GM12878 (cell line): ENCODE measurements at regions of chr5 and their contacts with region 1.

Region 1: GRCh38 chr5:143524338-143524945 is 121.0 kb upstream of the NR3C1 start:
- DNase-seq: no peak
- ATAC-seq: peak; percentile 66
- H3K4me3 ChIP-seq: no peak overlapping the region
- H3K27ac ChIP-seq: no peak overlapping the region
- H3K4me1 ChIP-seq: no peaks in the 10 kb centered on the region
- H3K27me3 ChIP-seq: no peaks in the 10 kb centered on the region
- CTCF ChIP-seq: no peak
- EP300 ChIP-seq: no peak
- POLR2A ChIP-seq: no peak
- RAD21 ChIP-seq: no peak

Region 2: GRCh38 chr5:143023411-143024096 is 500.9 kb before region 1 on chr5:
- CTCF ChIA-PET with region 1: no interaction called
- POLR2A ChIA-PET with region 1: no interaction called
- RAD21 ChIA-PET with region 1: no interaction called
- SMC1A ChIA-PET with region 1: no interaction called
- in situ Hi-C with region 1: no loop called
- intact Hi-C with region 1: no loop called
- DNase-seq: peak; percentile 87
- ATAC-seq: peak; percentile 65
- H3K4me3 ChIP-seq: 0 out of 2 replicates have a peak overlapping the region, but pooled peaks have one; percentile 21
- H3K27ac ChIP-seq: peak overlapping the region; percentile 95
- H3K4me1 ChIP-seq: peaks cover 77% of the 10 kb centered on the region
- H3K27me3 ChIP-seq: no peaks in the 10 kb centered on the region
- CTCF ChIP-seq: no peak; a peak in 1 of 6 replicates
- EP300 ChIP-seq: peak; percentile 52 to 66; a peak in 2 of 4 replicates
- POLR2A ChIP-seq: peak; percentile 60
- RAD21 ChIP-seq: peak; percentile 36

Region 3: DNA sequence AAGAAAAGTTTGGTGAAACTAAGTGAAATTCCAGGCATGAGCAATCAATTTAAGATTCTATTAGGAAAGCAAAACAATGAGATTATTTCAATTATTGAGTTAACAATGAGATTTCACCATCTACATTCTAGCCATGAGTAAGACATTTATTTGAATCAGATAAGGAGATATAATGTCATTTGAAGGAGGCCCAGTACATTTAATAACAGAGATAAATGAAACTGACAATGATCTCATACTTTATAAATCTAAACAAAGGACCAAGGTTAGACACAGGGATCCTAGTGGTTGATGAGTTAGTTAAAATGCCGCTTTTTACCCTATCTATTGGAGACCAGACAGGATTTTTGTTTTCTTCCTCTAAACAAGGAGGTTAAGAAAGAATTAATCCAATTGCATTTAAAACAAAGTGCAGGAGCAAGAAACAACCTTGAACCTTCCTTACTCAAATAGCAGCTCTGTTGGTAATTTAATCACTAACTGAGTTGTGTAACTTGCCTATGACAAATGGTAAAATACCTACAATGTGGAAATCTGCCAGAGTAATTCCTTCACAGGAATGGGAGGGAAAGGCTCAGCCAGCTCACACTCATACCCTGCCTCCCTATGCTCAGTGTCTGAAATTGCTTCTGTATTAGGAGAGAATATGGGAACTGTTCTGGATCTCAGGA is 17.4 kb before region 1 on chr5:
- CTCF ChIA-PET with region 1: interaction called, 4 read pairs
- POLR2A ChIA-PET with region 1: no interaction called
- RAD21 ChIA-PET with region 1: interaction called, 3 read pairs
- SMC1A ChIA-PET with region 1: interaction called, 39 read pairs
- in situ Hi-C with region 1: no loop called
- intact Hi-C with region 1: no loop called
- DNase-seq: no peak
- ATAC-seq: no peak
- H3K4me3 ChIP-seq: no peak overlapping the region
- H3K27ac ChIP-seq: no peak overlapping the region
- H3K4me1 ChIP-seq: peaks cover 14% of the 10 kb centered on the region
- H3K27me3 ChIP-seq: no peaks in the 10 kb centered on the region
- CTCF ChIP-seq: no peak
- EP300 ChIP-seq: no peak
- POLR2A ChIP-seq: no peak
- RAD21 ChIP-seq: no peak

Region 4: DNA sequence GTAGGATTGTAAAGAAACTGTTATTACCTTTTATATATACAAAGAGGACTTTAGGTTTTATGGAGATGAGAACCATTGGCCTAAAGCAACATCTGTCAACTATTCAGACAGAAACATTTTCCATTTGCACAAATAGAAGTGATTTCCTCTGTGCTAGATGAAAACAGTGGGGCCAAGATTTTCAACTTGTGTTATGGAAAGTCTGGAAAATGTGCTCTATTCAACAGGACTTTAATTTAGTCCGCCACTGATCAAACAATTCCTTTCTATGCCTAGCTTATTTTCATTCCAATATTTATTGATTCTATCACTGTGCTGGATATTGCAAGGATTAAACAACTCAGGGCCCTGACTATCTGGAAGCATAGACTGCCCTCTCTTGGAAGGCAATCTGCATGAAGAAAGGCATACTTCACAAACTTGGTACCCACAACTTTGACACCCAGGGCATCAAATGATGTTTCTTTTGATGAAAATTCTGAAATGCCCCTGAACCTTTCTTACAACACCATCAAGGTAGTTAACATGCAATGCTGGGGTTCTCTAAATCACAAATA is 160.9 kb after region 1 on chr5:
- CTCF ChIA-PET with region 1: no interaction called
- POLR2A ChIA-PET with region 1: no interaction called
- RAD21 ChIA-PET with region 1: no interaction called
- SMC1A ChIA-PET with region 1: no interaction called
- in situ Hi-C with region 1: no loop called
- intact Hi-C with region 1: no loop called
- DNase-seq: no peak
- ATAC-seq: no peak
- H3K4me3 ChIP-seq: no peak overlapping the region
- H3K27ac ChIP-seq: no peak overlapping the region
- H3K4me1 ChIP-seq: no peaks in the 10 kb centered on the region
- H3K27me3 ChIP-seq: no peaks in the 10 kb centered on the region
- CTCF ChIP-seq: peak in 1 of 3 experiments; percentile 13; a peak in 1 of 6 replicates
- EP300 ChIP-seq: no peak
- POLR2A ChIP-seq: no peak
- RAD21 ChIP-seq: 0 out of 2 replicates have a peak, but pooled peaks have one; percentile 10